Activated B cell treated with CpG ODN at 0.5 μM for 24 hours (primary cell): ENCODE measurements at regions of chr6 and their contacts with region 1.

Region 1: GRCh38 chr6:149484733-149485700 is at the start of gene ZC3H12D:
- DNase-seq: peak; percentile 75
- ATAC-seq: peak; percentile 47
- H3K4me3 Mint-ChIP-seq: peak within 1 kb of the TSS; percentile 97
- H3K27ac Mint-ChIP-seq: peak within 1 kb of the TSS; percentile 99
- H3K4me1 Mint-ChIP-seq: peaks cover 87% of the 10 kb centered on the region
- H3K27me3 Mint-ChIP-seq: no peaks in the 10 kb centered on the region
- CTCF ChIP-seq: no peak
- total RNA-seq, gene ZC3H12D: 184 and 225 TPM in 2 replicates

Region 2: GRCh38 chr6:149454386-149454848 is 30.6 kb before region 1 on chr6:
- CTCF ChIA-PET with region 1: interaction called, 10 read pairs
- POLR2A ChIA-PET with region 1: interaction called, 3 read pairs
- intact Hi-C with region 1: no loop called
- DNase-seq: no peak
- ATAC-seq: no peak
- H3K4me3 Mint-ChIP-seq: no peak overlapping the region
- H3K27ac Mint-ChIP-seq: no peak overlapping the region
- H3K4me1 Mint-ChIP-seq: peaks cover 19% of the 10 kb centered on the region
- H3K27me3 Mint-ChIP-seq: no peaks in the 10 kb centered on the region
- CTCF ChIP-seq: no peak

Region 3: DNA sequence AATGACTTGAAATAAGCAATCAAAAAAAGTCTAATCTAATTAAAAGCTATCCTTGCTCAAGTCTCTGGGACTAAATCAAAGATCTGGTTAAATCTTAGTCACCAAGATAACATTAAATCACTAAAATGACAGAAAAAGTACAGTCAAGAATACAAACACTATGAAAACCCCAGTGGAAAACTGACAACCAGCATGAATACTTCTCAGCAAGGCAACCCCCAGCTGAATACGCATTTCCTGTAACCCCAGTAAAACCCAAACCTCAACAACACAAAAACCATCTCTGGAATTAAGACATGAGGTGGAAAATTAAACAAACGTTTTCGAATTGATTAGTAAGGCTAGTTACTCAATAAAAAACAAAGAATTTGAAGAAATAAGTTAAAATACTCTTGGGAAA is 23.5 kb after region 1 on chr6:
- CTCF ChIA-PET with region 1: interaction called, 7 read pairs
- POLR2A ChIA-PET with region 1: interaction called, 14 read pairs
- intact Hi-C with region 1: no loop called
- DNase-seq: no peak
- ATAC-seq: no peak
- H3K4me3 Mint-ChIP-seq: no peak overlapping the region
- H3K27ac Mint-ChIP-seq: no peak overlapping the region
- H3K4me1 Mint-ChIP-seq: peaks cover 16% of the 10 kb centered on the region
- H3K27me3 Mint-ChIP-seq: no peaks in the 10 kb centered on the region
- CTCF ChIP-seq: no peak